Mammary epithelial cell (primary cell): ENCODE measurements at regions of chr3 and their contacts with region 1.

Region 1: GRCh38 chr3:43286115-43286840 is at the start of gene SNRK:
- DNase-seq: peak; percentile 81
- H3K4me3 ChIP-seq: peak within 1 kb of the TSS; percentile 69 to 86 (median 80)
- H3K27ac ChIP-seq: peak within 1 kb of the TSS; percentile 92
- H3K4me1 ChIP-seq: peaks cover 32% of the 10 kb centered on the region
- H3K27me3 ChIP-seq: no peaks in the 10 kb centered on the region
- CTCF ChIP-seq: peak in 1 of 2 donors; percentile 43
- total RNA-seq, gene SNRK: 17.5 to 18.6 TPM

Region 2: DNA sequence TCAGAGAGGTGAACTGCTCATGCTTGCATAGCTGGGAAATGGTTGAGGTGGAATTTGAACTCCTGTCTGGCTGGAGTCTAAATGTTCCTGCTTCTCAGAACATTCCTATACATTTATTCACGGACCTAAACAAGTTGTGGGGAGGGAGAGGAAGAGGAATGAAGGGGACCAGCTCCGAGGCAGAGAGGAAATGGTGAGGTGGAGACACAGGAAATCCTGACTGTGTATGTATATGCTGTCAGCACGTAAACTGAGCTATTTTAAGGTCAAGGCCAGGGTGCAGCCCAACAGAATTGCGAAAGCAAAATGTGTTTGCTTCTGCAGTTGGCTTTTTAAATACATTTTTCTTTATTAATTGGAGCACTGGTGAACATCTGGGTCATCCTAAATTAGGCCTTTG is 106.3 kb before region 1 on chr3:
- CTCF ChIA-PET with region 1: no interaction called
- dilution Hi-C with region 1: no loop called
- in situ Hi-C with region 1: no loop called
- intact Hi-C with region 1: loop called (anchors 5 kb)
- DNase-seq: peak; percentile 89
- H3K4me3 ChIP-seq: no peak overlapping the region
- H3K27ac ChIP-seq: peak overlapping the region; percentile 48
- H3K4me1 ChIP-seq: peaks cover 33% of the 10 kb centered on the region
- H3K27me3 ChIP-seq: peaks cover 2% of the 10 kb centered on the region
- CTCF ChIP-seq: no peak

Region 3: GRCh38 chr3:43236008-43236407 is 50.3 kb before region 1 on chr3:
- CTCF ChIA-PET with region 1: no interaction called
- dilution Hi-C with region 1: no loop called
- in situ Hi-C with region 1: no loop called
- intact Hi-C with region 1: loop called (anchors 5 kb)
- DNase-seq: peak; percentile 59
- H3K4me3 ChIP-seq: no peak overlapping the region
- H3K27ac ChIP-seq: no peak overlapping the region
- H3K4me1 ChIP-seq: peaks cover 17% of the 10 kb centered on the region
- H3K27me3 ChIP-seq: no peaks in the 10 kb centered on the region
- CTCF ChIP-seq: no peak

Region 4: DNA sequence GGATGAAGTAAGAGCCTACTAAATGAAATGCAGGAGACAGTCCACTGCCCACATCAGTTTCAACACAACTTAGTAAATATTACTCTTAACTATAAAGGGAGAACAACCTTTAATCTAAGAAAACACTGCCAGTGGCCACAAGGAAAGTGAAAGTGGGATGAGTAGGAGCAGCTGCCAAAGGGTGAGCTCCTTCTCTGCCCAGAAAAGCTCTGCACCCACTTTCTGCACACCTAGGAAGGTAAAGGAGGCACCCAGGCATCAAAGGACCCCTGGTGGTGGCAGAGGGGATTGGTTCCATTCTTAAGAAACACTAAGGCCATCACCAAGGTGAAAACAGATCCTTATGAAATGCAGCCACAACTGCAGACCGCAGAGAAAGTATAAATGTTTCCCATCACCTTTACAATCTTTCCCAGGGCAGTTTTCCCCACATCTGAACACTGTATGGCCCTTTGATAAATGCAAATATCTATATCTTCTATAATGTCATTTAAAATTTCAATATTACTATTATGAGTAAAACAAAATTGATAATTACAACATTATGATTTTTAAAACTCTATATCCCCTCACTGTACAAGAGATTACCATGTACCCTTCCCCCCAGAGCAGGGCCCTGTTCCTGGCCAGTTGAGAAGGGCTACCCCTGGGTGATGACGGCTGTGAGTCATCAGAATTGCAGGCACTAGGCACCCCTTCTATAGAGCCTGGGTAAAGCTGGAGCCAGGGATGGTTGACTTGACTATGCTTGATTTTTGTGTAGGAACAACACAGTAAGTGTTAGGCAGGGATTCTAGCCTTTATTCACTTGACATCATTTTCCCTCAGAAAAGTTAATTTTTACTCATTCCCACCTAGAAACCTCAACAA is 92.0 kb after region 1 on chr3:
- CTCF ChIA-PET with region 1: no interaction called
- dilution Hi-C with region 1: no loop called
- in situ Hi-C with region 1: no loop called
- intact Hi-C with region 1: loop called (anchors 1 kb)
- DNase-seq: peak; percentile 43
- H3K4me3 ChIP-seq: no peak overlapping the region
- H3K27ac ChIP-seq: no peak overlapping the region
- H3K4me1 ChIP-seq: no peaks in the 10 kb centered on the region
- H3K27me3 ChIP-seq: no peaks in the 10 kb centered on the region
- CTCF ChIP-seq: peak; percentile 86 to 87

Region 5: DNA sequence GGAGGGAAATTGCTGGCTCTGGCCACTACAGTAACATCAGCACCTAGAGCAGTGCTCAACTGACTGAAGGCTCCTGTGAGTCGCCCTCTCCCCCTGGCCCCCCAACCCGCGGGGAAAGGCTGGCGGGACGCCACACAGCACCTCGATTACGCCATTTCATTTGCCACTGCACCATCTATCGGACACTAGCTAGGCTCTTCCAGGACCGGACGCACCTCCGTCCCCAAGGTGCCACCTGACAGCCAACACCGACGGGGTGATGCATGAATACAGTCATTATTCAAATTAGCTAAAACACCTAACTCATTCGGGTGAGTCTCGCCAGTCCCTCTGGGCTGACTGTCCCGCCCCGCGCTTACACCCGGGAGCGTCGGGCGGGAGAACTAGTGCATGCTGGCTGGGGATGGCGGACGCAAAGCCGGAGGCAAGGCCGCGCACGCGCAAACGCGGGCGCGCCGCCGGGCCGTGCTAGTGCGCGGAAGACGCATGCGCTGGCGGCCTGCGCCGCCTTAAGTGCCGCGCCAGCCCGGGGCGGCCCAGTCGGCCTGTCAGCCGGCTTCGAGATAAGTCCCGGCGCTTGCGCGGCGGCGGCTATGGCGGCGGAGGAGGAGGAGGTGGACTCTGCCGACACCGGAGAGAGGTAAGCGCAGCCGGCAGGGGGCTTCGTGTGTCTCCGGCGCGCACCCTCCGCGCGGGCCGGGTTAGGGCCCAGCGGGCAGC is 404.3 kb after region 1 on chr3 and contains the start of gene ABHD5:
- CTCF ChIA-PET with region 1: no interaction called
- dilution Hi-C with region 1: no loop called
- in situ Hi-C with region 1: no loop called
- intact Hi-C with region 1: loop called (anchors 5 kb)
- DNase-seq: peak; percentile 95
- H3K4me3 ChIP-seq: peak within 1 kb of the TSS; percentile 74 to 87 (median 85)
- H3K27ac ChIP-seq: peak within 1 kb of the TSS; percentile 55
- H3K4me1 ChIP-seq: peaks cover 42% of the 10 kb centered on the region
- H3K27me3 ChIP-seq: no peaks in the 10 kb centered on the region
- CTCF ChIP-seq: peak in 1 of 2 donors; percentile 29
- total RNA-seq, gene ABHD5: 37.9 to 59.8 TPM